ENCODE measurements at regions of chr6 and their contacts with region 1.

Region 1: GRCh38 chr6:73732845-73733675 is 37.1 kb downstream of the CD109 start:
- DNase-seq: peak; percentile 78
- ATAC-seq: peak; percentile 92
- H3K4me3 Mint-ChIP-seq: no peak overlapping the region
- H3K27ac Mint-ChIP-seq: no peak overlapping the region
- H3K4me1 Mint-ChIP-seq: peaks cover 11% of the 10 kb centered on the region
- H3K27me3 Mint-ChIP-seq: no peaks in the 10 kb centered on the region
- CTCF ChIP-seq: peak; percentile 88

Region 2: GRCh38 chr6:73388800-73389512 is 344.1 kb before region 1 on chr6:
- CTCF ChIA-PET with region 1: no interaction called
- POLR2A ChIA-PET with region 1: no interaction called
- intact Hi-C with region 1: no loop called
- DNase-seq: peak; percentile 76
- ATAC-seq: peak; percentile 90
- H3K4me3 Mint-ChIP-seq: peak overlapping the region; percentile 75
- H3K27ac Mint-ChIP-seq: peak overlapping the region; percentile 57
- H3K4me1 Mint-ChIP-seq: peaks cover 14% of the 10 kb centered on the region
- H3K27me3 Mint-ChIP-seq: peaks cover 5% of the 10 kb centered on the region
- CTCF ChIP-seq: peak; percentile 51

Region 3: GRCh38 chr6:73537677-73538076 is 195.4 kb before region 1 on chr6:
- CTCF ChIA-PET with region 1: no interaction called
- POLR2A ChIA-PET with region 1: no interaction called
- intact Hi-C with region 1: no loop called
- DNase-seq: no peak
- ATAC-seq: no peak
- H3K4me3 Mint-ChIP-seq: no peak overlapping the region
- H3K27ac Mint-ChIP-seq: no peak overlapping the region
- H3K4me1 Mint-ChIP-seq: no peaks in the 10 kb centered on the region
- H3K27me3 Mint-ChIP-seq: no peaks in the 10 kb centered on the region
- CTCF ChIP-seq: no peak

Region 4: DNA sequence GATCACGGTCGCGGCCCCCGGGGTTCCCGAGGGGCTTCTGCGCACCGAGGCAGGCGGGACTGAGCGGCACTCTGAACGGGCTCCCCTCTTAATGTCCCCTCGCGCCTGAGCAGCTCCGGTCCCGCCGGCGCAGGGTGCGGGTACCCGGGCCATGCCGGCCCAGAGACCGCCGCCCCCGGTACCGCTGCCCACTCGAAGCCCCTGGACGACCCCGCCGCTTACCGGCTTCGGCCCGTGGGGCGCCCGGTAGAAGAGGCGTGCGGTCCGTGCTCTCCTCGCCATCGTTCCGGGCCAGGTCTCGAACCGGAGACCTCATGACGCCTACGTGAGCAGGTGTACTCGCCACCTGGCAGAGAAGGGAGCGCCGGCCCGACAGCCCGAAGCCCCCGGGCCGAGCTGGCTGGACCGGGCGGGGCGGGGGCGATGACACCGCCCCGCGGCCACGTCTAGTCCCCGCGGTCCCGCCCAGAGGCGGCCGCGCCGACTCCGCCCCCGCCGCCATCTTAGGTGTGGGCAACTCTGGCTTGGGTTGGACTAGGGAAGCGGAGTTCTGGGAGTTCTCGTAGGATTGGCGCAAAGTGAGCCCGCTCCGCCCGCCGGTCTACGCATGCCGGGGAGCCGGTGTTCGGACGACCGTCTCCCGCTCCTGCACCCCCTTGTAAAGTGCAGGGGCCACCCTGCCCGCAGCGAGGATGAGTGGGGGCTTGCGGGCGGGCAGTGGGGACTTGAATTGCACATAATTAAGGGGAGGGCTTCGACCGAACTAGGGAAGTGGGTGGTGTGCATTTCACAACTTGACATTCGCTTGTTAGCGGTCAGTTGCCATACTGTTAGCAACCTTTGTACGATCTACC is 79.3 kb before region 1 on chr6 and contains the start of gene SLC17A5:
- CTCF ChIA-PET with region 1: interaction called, 14 read pairs
- POLR2A ChIA-PET with region 1: no interaction called
- intact Hi-C with region 1: no loop called
- DNase-seq: peak; percentile 92
- ATAC-seq: peak; percentile 89
- H3K4me3 Mint-ChIP-seq: peak within 1 kb of the TSS; percentile 87
- H3K27ac Mint-ChIP-seq: peak within 1 kb of the TSS; percentile 92
- H3K4me1 Mint-ChIP-seq: peaks cover 31% of the 10 kb centered on the region
- H3K27me3 Mint-ChIP-seq: no peaks in the 10 kb centered on the region
- CTCF ChIP-seq: no peak
- total RNA-seq, gene SLC17A5: 4.2 to 5.0 TPM

Region 5: GRCh38 chr6:73675466-73676098 is 57.5 kb before region 1 on chr6:
- CTCF ChIA-PET with region 1: interaction called, 135 read pairs
- POLR2A ChIA-PET with region 1: interaction called, 5 read pairs
- intact Hi-C with region 1: loop called (anchors 1 kb)
- DNase-seq: peak; percentile 84
- ATAC-seq: peak; percentile 94
- H3K4me3 Mint-ChIP-seq: no peak overlapping the region
- H3K27ac Mint-ChIP-seq: no peak overlapping the region
- H3K4me1 Mint-ChIP-seq: peaks cover 7% of the 10 kb centered on the region
- H3K27me3 Mint-ChIP-seq: peaks cover 22% of the 10 kb centered on the region
- CTCF ChIP-seq: peak; percentile 93

Region 6: DNA sequence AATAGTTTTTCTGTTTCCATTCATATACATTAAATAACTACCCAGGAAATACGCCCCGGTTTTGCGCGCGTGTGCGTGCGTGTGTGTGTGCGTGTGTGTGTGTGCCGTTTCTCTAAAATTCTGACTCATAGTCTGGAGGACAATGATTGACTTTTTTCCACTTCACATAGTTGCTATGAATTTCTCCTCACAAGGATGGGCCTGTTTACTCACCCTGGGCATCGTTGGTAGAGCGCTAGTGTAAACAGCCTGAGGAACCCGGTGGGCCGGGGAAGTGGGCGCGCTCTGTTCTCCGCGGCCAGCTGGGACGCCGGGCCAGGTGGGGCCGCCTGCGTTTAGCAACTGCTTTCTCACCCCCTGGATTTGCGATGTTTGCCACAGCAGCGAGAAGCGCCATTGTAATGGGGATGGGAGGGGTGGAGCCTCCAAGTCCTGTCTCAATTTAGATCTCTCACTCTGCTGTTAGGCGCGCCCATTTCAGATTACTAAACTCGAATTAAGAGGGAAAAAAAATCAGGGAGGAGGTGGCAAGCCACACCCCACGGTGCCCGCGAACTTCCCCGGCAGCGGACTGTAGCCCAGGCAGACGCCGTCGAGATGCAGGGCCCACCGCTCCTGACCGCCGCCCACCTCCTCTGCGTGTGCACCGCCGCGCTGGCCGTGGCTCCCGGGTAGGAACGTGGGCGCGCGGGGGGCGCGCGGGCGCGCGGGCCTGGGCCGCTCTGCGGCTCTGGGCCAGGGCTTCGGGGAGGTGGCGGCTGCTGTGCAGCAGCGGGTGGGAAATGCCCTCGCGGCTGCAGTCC is 37.2 kb before region 1 on chr6 and contains the start of gene CD109:
- CTCF ChIA-PET with region 1: interaction called, 16 read pairs
- POLR2A ChIA-PET with region 1: interaction called, 13 read pairs
- intact Hi-C with region 1: no loop called
- DNase-seq: peak; percentile 86
- ATAC-seq: peak; percentile 87
- H3K4me3 Mint-ChIP-seq: peak within 1 kb of the TSS; percentile 95
- H3K27ac Mint-ChIP-seq: peak within 1 kb of the TSS; percentile 98
- H3K4me1 Mint-ChIP-seq: peaks cover 41% of the 10 kb centered on the region
- H3K27me3 Mint-ChIP-seq: peaks cover 32% of the 10 kb centered on the region
- CTCF ChIP-seq: no peak
- total RNA-seq, gene CD109: 9.5 to 10.6 TPM

Region 7: GRCh38 chr6:73722318-73723060 is 10.6 kb before region 1 on chr6:
- CTCF ChIA-PET with region 1: interaction called, 37 read pairs
- POLR2A ChIA-PET with region 1: no interaction called
- intact Hi-C with region 1: no loop called
- DNase-seq: peak; percentile 60
- ATAC-seq: peak; percentile 94
- H3K4me3 Mint-ChIP-seq: peak overlapping the region; percentile 2
- H3K27ac Mint-ChIP-seq: peak overlapping the region; percentile 62
- H3K4me1 Mint-ChIP-seq: peaks cover 29% of the 10 kb centered on the region
- H3K27me3 Mint-ChIP-seq: no peaks in the 10 kb centered on the region
- CTCF ChIP-seq: no peak

Region 8: GRCh38 chr6:75208298-75209183 is 1475.5 kb after region 1 on chr6:
- CTCF ChIA-PET with region 1: interaction called, 69 read pairs
- POLR2A ChIA-PET with region 1: no interaction called
- intact Hi-C with region 1: no loop called
- DNase-seq: peak; percentile 87
- ATAC-seq: peak; percentile 85
- H3K4me3 Mint-ChIP-seq: peak overlapping the region; percentile 26
- H3K27ac Mint-ChIP-seq: no peak overlapping the region
- H3K4me1 Mint-ChIP-seq: peaks cover 45% of the 10 kb centered on the region
- H3K27me3 Mint-ChIP-seq: peaks cover 71% of the 10 kb centered on the region
- CTCF ChIP-seq: peak; percentile 90